Ovary (tissue), 10 donors: ENCODE measurements at regions of chr1 and their contacts with region 1.

Region 1: DNA sequence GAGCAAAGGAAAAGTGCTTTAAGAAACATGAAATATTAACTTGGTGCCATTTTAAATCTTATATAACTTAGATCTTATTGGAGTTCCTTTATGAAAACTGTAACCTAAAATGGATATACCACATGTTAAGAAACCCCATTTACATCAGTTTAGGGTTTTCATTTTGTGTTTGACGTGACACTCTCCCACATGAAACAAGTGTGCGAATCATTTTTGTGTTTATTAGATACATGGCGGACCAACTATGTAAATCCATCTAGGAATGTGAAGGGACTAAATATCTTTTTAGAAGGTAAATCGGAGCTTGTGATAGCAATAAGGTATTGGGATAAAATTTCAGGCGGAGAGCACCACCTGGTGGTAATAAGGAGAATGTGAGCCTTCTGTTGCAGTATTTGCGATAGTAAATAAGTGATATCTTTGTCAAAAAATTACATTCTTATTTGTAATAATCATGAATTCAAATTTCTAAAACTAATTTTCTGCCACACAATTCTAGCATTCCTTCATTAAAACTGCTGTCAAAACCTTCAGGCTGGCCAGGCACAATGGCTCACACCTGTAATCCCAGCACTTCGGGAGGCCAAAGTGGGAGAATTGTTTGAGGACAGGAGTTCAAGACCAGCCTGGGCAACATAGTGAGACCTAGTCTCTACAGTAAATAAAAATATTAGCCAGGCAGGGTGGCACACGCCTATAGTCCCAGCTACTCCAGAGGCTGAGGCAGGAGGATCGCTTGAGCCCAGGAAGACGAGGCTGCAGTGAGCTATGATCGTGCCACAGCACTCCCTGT is 31.3 kb downstream of the SMAP2 start:
- DNase-seq: peak in 1 of 5 donors; percentile 40
- H3K4me3 ChIP-seq: no peak overlapping the region
- H3K27ac ChIP-seq: no peak overlapping the region
- H3K4me1 ChIP-seq: no peaks in the 10 kb centered on the region
- H3K27me3 ChIP-seq: no peaks in the 10 kb centered on the region
- CTCF ChIP-seq: peak; percentile 73 to 81 (median 80)
- EP300 ChIP-seq: no peak
- POLR2A ChIP-seq: no peak

Region 2: GRCh38 chr1:40143891-40144575 is 260.8 kb before region 1 on chr1:
- intact Hi-C with region 1: loop called (anchors 5 to 10 kb)
- DNase-seq: peak in 4 of 5 donors; percentile 12 to 60 (median 34)
- H3K4me3 ChIP-seq: no peak overlapping the region
- H3K27ac ChIP-seq: no peak overlapping the region
- H3K4me1 ChIP-seq: peaks cover 3% of the 10 kb centered on the region
- H3K27me3 ChIP-seq: no peaks in the 10 kb centered on the region
- CTCF ChIP-seq: peak; percentile 53 to 64 (median 58)
- EP300 ChIP-seq: no peak
- POLR2A ChIP-seq: no peak

Region 3: DNA sequence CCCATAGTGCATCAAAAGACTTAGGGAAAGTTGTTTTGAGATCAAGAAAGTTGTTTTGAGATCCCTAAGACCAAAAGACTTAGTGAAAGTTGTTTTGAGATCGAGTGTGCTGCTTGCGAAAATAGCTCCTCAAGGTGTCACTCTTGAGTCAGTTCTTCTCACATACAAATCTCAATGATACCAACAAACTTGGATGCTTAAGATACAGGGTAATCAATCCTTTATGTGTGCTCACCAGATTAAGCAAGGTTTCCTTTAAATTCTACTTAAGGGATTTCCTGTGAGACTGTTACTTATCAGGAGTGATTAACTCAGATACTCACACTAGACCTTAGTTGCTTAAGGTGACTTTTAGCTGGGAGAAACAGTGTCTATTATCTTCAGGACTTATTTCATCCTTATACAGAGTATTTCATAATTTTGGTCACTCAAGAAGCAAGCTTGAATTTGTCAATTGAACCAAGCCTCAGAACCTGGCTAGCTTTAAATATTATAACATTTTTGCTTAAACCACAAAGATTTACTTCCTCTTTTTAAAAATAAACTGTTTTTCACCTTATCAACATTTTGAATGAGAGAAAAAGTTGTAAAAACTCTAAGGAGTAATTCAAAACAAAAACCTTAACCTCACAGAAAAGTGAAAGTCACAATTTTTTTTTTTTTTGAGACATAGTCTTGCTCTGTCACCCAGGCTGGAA is 251.6 kb before region 1 on chr1:
- intact Hi-C with region 1: loop called in 3 of 4 experiments (anchors 5 to 10 kb)
- DNase-seq: no peak
- H3K4me3 ChIP-seq: no peak overlapping the region
- H3K27ac ChIP-seq: no peak overlapping the region
- H3K4me1 ChIP-seq: no peaks in the 10 kb centered on the region
- H3K27me3 ChIP-seq: no peaks in the 10 kb centered on the region
- CTCF ChIP-seq: peak in 2 of 3 donors; percentile 38 to 39
- EP300 ChIP-seq: no peak
- POLR2A ChIP-seq: no peak

Region 4: DNA sequence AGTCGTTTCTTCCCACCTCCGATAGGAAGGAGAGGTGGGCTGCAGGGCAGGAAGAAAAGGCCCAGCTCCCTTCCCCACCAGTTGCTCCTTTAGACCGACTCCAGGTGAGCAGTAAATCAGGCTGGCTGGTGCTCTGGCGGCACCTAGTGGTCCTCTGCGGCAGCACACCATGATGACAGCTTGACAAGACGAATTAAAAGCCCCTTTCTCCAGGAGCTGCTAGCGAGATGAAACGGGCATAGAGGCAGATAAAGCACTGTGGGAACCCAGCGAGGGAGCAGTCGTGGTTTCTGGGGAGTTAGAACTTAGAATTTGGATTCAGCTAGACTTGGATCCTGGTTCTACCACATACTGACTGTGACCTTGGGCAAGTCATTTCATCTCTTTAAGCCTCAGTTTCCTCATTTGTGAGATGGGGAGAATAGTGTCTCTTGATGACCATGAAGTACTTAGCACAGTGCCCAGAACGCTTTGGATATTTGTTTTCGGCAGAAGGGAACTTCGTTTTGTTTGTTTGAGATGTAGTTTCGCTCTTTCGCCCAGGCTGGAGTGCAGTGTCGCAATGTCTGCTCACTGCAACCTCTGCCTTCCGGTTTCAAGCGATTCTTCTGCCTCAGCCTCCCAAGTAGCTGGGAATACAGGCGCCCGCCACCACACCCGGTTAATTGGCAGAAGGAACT is 66.0 kb before region 1 on chr1:
- intact Hi-C with region 1: loop called in 2 of 4 experiments (anchors 2 to 10 kb)
- DNase-seq: peak; percentile 44 to 82 (median 71)
- H3K4me3 ChIP-seq: no peak overlapping the region
- H3K27ac ChIP-seq: no peak overlapping the region
- H3K4me1 ChIP-seq: no peaks in the 10 kb centered on the region
- H3K27me3 ChIP-seq: no peaks in the 10 kb centered on the region
- CTCF ChIP-seq: peak; percentile 78 to 97 (median 78)
- EP300 ChIP-seq: no peak
- POLR2A ChIP-seq: no peak

Region 5: DNA sequence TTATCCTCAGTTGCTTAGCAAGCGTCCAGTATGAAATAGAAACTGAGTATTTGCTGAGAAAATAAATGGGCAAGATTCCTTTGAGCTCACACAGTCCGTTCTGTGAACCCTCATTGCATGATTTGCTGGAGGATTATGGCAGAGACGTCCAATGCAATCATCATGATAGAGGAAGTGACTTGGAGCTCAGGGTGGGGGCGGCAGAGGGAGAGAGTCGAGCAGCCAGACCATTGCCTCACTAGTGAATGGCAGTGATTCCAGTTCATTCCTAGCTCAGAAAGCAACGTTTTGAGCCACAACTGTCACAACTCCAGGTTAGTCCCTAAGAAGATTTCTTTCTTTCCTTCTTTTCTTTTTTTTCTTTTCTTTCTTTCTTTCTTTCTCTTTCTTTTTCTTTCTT is 60.3 kb before region 1 on chr1:
- intact Hi-C with region 1: loop called in 2 of 4 experiments (anchors 2 to 10 kb)
- DNase-seq: no peak
- H3K4me3 ChIP-seq: no peak overlapping the region
- H3K27ac ChIP-seq: no peak overlapping the region
- H3K4me1 ChIP-seq: no peaks in the 10 kb centered on the region
- H3K27me3 ChIP-seq: no peaks in the 10 kb centered on the region
- CTCF ChIP-seq: no peak
- EP300 ChIP-seq: no peak
- POLR2A ChIP-seq: no peak